ENCODE measurements at regions of chr11 and their contacts with region 1.

Region 1: GRCh38 chr11:72598906-72599305 is 75.3 kb downstream of the PDE2A start:
- DNase-seq: peak; percentile 68
- ATAC-seq: peak; percentile 75
- H3K4me3 Mint-ChIP-seq: no peak overlapping the region
- H3K27ac Mint-ChIP-seq: no peak overlapping the region
- H3K4me1 Mint-ChIP-seq: peaks cover 35% of the 10 kb centered on the region
- H3K27me3 Mint-ChIP-seq: peaks cover 13% of the 10 kb centered on the region
- CTCF ChIP-seq: peak; percentile 15; the same call in 1 of the 2 replicates

Region 2: GRCh38 chr11:72609045-72609444 is 10.1 kb after region 1 on chr11:
- CTCF ChIA-PET with region 1: interaction called, 73 read pairs
- POLR2A ChIA-PET with region 1: no interaction called
- DNase-seq: no peak
- ATAC-seq: peak; percentile 47
- H3K4me3 Mint-ChIP-seq: no peak overlapping the region
- H3K27ac Mint-ChIP-seq: no peak overlapping the region
- H3K4me1 Mint-ChIP-seq: no peaks in the 10 kb centered on the region
- H3K27me3 Mint-ChIP-seq: peaks cover 3% of the 10 kb centered on the region
- CTCF ChIP-seq: no peak

Region 3: GRCh38 chr11:72617080-72617762 is 18.3 kb after region 1 on chr11:
- CTCF ChIA-PET with region 1: interaction called, 73 read pairs
- POLR2A ChIA-PET with region 1: no interaction called
- DNase-seq: no peak
- ATAC-seq: peak; percentile 26
- H3K4me3 Mint-ChIP-seq: no peak overlapping the region
- H3K27ac Mint-ChIP-seq: no peak overlapping the region
- H3K4me1 Mint-ChIP-seq: peaks cover 11% of the 10 kb centered on the region
- H3K27me3 Mint-ChIP-seq: peaks cover 13% of the 10 kb centered on the region
- CTCF ChIP-seq: no peak

Region 4: GRCh38 chr11:72625691-72626413 is 26.9 kb after region 1 on chr11:
- CTCF ChIA-PET with region 1: interaction called, 43 read pairs
- POLR2A ChIA-PET with region 1: no interaction called
- DNase-seq: no peak
- ATAC-seq: peak; percentile 41
- H3K4me3 Mint-ChIP-seq: no peak overlapping the region
- H3K27ac Mint-ChIP-seq: no peak overlapping the region
- H3K4me1 Mint-ChIP-seq: peaks cover 3% of the 10 kb centered on the region
- H3K27me3 Mint-ChIP-seq: peaks cover 6% of the 10 kb centered on the region; the same call in 1 of the 2 replicates
- CTCF ChIP-seq: no peak

Region 5: DNA sequence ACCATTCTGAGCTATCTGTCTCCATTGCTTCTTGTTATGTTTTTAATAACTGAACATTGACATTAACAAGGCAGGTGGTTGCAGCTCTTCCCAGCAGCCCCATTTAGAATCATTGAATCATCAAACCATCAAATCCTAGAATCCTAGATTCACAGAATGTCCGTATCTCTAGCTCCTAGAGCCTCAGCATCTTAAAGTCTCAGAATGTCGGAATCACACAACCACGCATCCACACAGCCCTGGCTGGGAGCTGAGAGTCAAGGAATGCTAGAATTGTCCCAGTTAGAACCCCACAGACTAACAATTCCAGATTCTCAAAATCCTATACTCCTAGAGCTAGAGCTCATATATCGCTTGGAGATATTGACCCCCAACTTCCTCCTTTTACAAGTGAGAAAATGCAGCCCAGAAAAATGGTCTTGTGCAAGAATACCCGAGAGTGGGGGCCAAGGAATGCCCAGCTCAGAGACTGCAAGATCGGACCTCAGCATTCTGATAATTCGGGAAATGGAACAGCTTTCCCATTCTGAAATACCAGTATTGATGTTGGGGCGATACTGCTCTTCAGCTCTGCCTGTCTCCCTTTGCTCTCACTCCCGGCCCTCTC is 36.5 kb after region 1 on chr11:
- CTCF ChIA-PET with region 1: interaction called, 56 read pairs
- POLR2A ChIA-PET with region 1: interaction called, 3 read pairs
- DNase-seq: no peak
- ATAC-seq: no peak
- H3K4me3 Mint-ChIP-seq: no peak overlapping the region
- H3K27ac Mint-ChIP-seq: no peak overlapping the region
- H3K4me1 Mint-ChIP-seq: peaks cover 38% of the 10 kb centered on the region
- H3K27me3 Mint-ChIP-seq: peaks cover 5% of the 10 kb centered on the region
- CTCF ChIP-seq: no peak

Region 6: GRCh38 chr11:72642884-72643511 is 44.1 kb after region 1 on chr11:
- CTCF ChIA-PET with region 1: interaction called, 83 read pairs
- POLR2A ChIA-PET with region 1: no interaction called
- DNase-seq: peak; percentile 74
- ATAC-seq: peak; percentile 79
- H3K4me3 Mint-ChIP-seq: peak overlapping the region; percentile 59
- H3K27ac Mint-ChIP-seq: no peak overlapping the region
- H3K4me1 Mint-ChIP-seq: no peaks in the 10 kb centered on the region
- H3K27me3 Mint-ChIP-seq: peaks cover 26% of the 10 kb centered on the region
- CTCF ChIP-seq: peak; percentile 98

Region 7: GRCh38 chr11:72676861-72677341 is 78.0 kb after region 1 on chr11:
- CTCF ChIA-PET with region 1: interaction called, 461 read pairs
- POLR2A ChIA-PET with region 1: interaction called, 4 read pairs
- DNase-seq: peak; percentile 94
- ATAC-seq: peak; percentile 79
- H3K4me3 Mint-ChIP-seq: peak overlapping the region; percentile 53
- H3K27ac Mint-ChIP-seq: no peak overlapping the region
- H3K4me1 Mint-ChIP-seq: peaks cover 41% of the 10 kb centered on the region
- H3K27me3 Mint-ChIP-seq: peaks cover 91% of the 10 kb centered on the region
- CTCF ChIP-seq: no peak